Cardiac septum (tissue), 1 donor: ENCODE measurements at regions of chr18 and their contacts with region 1.

Region 1: DNA sequence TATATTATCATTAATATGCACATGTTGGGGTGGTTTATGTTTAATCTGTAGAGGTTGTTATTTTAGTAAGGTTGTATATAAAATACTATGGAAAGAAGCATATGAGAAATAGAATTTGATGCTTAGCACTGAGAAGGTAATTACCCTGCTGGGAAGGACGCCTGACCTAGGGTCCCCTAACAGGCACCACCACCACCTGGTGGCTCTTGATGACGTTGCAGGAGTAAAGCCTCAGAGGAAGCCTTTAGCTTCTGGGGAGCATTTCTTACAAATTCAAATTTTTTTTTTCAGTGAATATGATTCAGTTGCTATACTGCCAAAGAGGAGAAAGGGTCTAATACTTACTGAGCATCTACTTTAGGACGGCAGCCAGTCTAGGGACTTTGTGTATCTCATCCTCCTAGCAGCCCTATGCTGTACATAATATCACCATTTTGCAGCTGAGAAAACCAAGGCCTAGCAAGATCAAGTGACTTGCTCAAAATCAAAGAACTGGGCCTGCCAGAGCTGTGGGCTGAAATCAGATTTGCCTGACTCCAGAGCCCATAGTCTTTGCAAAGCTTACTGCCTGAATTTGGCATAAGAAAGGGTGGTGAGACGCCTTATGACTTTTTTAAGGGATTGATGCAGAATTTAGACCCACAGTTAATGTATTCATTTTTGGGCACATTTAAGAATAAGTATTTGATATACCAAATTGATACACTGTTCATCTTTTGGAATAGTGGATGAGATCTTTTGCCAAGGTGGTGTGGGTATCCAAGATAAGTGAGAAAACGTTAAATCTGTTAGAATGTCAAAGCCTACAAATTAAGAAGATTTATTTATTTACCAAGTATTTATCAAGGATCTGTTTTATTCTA is 78.8 kb upstream of the GAREM1 start:
- DNase-seq: no peak

Region 2: DNA sequence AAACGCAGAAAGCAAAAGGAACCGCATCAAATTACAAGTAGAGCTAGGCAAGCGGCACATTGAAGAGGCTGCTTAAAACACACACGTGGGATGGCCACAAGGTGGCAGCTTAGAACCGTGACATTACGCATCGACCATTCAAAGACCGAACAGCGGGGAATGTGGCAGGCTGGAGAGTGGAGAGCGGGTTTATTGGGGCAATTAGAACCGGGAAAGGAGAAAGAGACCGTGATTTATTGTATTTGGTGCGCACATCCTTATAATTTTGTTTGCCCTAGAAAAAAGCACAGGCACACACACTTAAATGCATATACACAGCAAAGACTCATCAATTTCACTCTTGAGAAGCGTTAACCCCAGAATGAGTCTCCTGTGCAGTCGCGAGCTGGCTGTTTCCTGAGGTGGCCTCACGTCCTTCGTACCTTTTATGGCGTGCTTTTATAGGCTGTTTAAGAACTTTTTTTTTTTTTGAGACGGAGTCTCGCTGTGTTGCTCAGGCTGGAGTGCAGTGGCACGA is 391.3 kb before region 1 on chr18:
- intact Hi-C with region 1: loop called (anchors 1 kb)
- DNase-seq: no peak

Region 3: DNA sequence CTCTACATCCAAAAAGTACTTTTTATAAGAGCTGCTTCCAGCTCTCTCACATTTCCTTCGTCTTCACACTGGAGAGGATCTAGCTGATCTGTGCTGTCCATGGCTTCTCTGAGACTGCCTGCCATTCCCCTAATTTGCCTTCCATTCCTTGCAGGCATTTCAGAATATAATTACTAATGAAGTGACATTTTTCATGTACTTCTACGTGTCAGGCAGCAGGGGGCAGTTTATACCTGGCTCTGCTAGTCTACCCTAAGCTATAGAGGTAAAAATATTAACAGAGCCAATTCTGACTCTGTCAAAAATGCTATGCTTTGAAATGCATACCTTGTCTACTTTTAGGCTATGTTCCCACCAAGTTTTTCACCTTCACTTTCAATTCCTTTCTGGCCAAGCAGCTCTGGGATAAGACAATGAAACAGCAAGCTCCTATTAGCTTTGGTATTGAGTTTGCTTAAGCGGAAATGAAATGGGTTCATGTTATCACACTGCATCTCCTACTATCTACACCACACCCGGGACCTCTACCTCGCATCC is 277.7 kb before region 1 on chr18:
- intact Hi-C with region 1: loop called (anchors 2 kb)
- DNase-seq: no peak